WTC11 (cell line): ENCODE measurements at regions of chr3 and their contacts with region 1.

Region 1: DNA sequence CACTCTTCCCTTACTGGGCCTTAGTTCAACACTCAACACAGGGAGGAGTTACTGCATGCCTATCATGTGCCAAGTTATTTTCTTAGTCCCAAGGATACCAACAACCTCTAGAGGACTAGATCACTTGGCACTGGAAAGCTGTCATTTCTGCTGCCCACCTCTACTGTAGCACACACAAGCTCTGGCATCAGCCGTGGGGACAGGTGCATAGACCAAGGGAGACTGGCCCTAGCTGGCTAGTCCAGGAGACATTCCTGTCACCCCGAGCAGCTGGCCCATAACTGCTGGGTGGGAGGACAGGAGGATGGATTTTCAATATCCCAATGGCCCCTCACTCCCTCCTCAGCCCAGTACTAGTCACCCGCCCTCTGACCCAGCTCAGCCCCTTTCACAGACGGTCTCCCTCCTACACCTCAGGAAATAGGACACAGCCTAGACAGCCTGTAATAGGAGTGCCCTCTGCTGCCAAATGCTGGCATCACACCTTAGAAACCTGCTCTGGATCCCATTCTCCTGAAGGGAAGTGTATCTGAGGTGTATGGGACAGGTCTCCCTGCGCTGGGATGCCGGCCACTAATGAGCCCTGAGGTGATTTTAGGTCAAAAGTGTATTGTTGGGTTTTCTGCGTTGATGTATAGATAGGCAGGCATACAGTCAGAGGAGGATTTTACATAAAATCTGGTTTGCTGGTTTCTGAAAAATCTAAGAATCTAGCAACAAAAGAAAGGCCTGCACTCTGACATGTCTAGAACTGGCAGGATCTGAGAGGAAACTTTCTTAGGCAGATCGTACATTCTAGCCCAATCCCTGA is 3.4 kb upstream of the DZIP1L start:
- DNase-seq: peak; percentile 91
- ATAC-seq: peak; percentile 74
- H3K4me3 Mint-ChIP-seq: 0 out of 2 replicates have a peak overlapping the region, but pooled peaks have one; percentile 4
- H3K27ac Mint-ChIP-seq: no peak overlapping the region
- H3K4me1 Mint-ChIP-seq: peaks cover 23% of the 10 kb centered on the region
- H3K27me3 Mint-ChIP-seq: peaks cover 9% of the 10 kb centered on the region
- CTCF ChIP-seq: peak; percentile 66

Region 2: DNA sequence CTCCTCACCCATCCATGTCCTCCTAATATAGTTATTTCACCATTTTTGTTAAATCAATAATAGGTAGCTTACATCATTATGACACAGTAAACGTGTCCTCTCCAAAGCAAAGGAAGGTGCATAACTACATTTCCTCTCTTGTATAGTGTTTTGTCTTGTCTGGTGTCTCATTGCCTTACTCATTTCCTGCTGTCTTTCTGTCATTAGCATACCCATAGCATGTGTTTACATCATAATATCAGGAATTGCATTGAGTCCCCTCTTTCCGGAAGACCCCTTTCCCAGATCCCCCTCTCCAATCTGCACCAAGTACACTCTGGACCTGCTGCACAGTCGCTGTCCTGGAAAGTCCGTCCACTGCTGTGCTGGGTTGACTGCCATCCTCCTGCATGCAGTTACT is 306.8 kb before region 1 on chr3:
- CTCF ChIA-PET with region 1: no interaction called
- POLR2A ChIA-PET with region 1: no interaction called
- DNase-seq: no peak
- ATAC-seq: peak; percentile 69
- H3K4me3 Mint-ChIP-seq: peak overlapping the region; percentile 33
- H3K27ac Mint-ChIP-seq: peak overlapping the region; percentile 47
- H3K4me1 Mint-ChIP-seq: peaks cover 48% of the 10 kb centered on the region
- H3K27me3 Mint-ChIP-seq: no peaks in the 10 kb centered on the region
- CTCF ChIP-seq: no peak

Region 3: GRCh38 chr3:137946345-137946973 is 172.4 kb before region 1 on chr3:
- CTCF ChIA-PET with region 1: no interaction called
- POLR2A ChIA-PET with region 1: no interaction called
- DNase-seq: peak; percentile 69
- ATAC-seq: peak; percentile 65
- H3K4me3 Mint-ChIP-seq: no peak overlapping the region
- H3K27ac Mint-ChIP-seq: no peak overlapping the region
- H3K4me1 Mint-ChIP-seq: peaks cover 19% of the 10 kb centered on the region
- H3K27me3 Mint-ChIP-seq: peaks cover 29% of the 10 kb centered on the region
- CTCF ChIP-seq: peak; percentile 86

Region 4: DNA sequence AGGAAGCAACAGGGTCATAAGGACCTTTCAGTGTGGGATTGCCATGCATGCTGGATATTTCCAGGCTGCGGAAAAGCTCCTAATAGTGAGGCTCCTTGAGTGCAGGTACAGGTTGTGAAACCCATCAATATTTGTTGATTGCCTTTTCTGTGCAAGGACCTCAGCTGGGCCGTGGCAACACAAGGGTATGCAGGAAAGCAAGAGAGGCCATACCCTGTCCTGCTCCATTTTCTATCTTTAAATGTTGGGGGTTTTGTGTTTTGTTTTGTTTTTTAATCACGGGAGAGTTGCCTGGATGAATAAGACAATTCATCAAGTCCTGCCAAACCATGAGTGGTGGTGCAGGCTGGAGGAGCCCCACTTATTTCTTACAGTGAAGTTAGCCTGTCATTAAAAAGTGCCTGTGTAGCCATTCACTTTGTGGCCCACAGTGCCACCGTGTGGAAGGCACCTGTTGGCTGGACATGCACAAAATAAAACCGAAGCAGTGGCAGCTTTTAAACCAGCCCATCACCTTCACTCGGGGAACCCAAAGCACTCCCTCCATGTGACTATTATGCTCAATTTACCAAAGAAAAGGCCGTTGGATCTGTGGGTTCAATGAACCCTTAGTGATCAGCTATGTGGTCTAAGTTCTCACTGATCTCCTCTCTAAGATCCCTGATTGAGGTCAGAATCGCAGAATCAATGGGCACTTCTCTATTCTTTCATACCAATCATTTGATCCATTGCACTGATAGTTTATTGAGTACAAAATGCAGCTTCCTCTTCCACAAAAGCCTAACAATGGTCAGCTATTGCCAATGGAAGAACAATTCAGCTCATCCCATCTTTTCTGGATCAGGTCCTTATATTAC is 66.6 kb before region 1 on chr3:
- CTCF ChIA-PET with region 1: interaction called, 14 read pairs
- POLR2A ChIA-PET with region 1: no interaction called
- DNase-seq: peak; percentile 59
- ATAC-seq: peak; percentile 81
- H3K4me3 Mint-ChIP-seq: no peak overlapping the region
- H3K27ac Mint-ChIP-seq: no peak overlapping the region
- H3K4me1 Mint-ChIP-seq: peaks cover 9% of the 10 kb centered on the region
- H3K27me3 Mint-ChIP-seq: no peaks in the 10 kb centered on the region
- CTCF ChIP-seq: peak; percentile 27; the same call in 1 of the 2 replicates

Region 5: GRCh38 chr3:138068579-138069174 is 50.1 kb before region 1 on chr3:
- CTCF ChIA-PET with region 1: interaction called, 34 read pairs
- POLR2A ChIA-PET with region 1: interaction called, 4 read pairs
- DNase-seq: peak; percentile 89
- ATAC-seq: peak; percentile 97
- H3K4me3 Mint-ChIP-seq: no peak overlapping the region
- H3K27ac Mint-ChIP-seq: no peak overlapping the region
- H3K4me1 Mint-ChIP-seq: peaks cover 18% of the 10 kb centered on the region
- H3K27me3 Mint-ChIP-seq: no peaks in the 10 kb centered on the region
- CTCF ChIP-seq: peak; percentile 97

Region 6: DNA sequence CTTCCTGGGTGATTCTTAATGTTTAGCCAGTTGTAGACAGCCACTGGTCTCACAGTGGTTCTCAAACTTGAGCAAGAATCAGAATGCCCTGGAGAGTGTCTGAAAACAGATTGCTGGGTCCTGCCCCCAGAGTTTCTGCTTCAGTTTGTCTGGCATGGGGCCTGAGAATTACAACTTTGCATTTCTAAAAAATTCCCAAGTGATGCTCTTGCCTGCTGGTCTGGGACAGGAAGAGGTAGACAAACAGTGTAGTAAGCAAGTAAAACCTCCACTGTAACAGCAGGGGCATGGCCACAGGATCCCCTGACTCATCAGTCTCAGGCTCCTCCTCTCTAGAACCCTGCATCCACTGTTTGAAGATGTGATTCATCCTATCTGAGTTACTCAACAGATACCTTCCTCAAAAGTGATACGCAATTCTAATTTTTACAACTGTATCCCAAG is 39.9 kb before region 1 on chr3:
- CTCF ChIA-PET with region 1: interaction called, 20 read pairs
- POLR2A ChIA-PET with region 1: no interaction called
- DNase-seq: no peak
- ATAC-seq: no peak
- H3K4me3 Mint-ChIP-seq: no peak overlapping the region
- H3K27ac Mint-ChIP-seq: no peak overlapping the region
- H3K4me1 Mint-ChIP-seq: 0 out of 2 replicates have a peak, but pooled peaks cover 5% of the 10 kb centered on the region
- H3K27me3 Mint-ChIP-seq: no peaks in the 10 kb centered on the region
- CTCF ChIP-seq: no peak

Region 7: GRCh38 chr3:138097169-138097800 is 21.5 kb before region 1 on chr3:
- CTCF ChIA-PET with region 1: interaction called, 61 read pairs
- POLR2A ChIA-PET with region 1: no interaction called
- DNase-seq: peak; percentile 68
- ATAC-seq: peak; percentile 96
- H3K4me3 Mint-ChIP-seq: no peak overlapping the region
- H3K27ac Mint-ChIP-seq: no peak overlapping the region
- H3K4me1 Mint-ChIP-seq: peaks cover 15% of the 10 kb centered on the region
- H3K27me3 Mint-ChIP-seq: peaks cover 2% of the 10 kb centered on the region; the same call in 1 of the 2 replicates
- CTCF ChIP-seq: peak; percentile 30; the same call in 1 of the 2 replicates

Region 8: DNA sequence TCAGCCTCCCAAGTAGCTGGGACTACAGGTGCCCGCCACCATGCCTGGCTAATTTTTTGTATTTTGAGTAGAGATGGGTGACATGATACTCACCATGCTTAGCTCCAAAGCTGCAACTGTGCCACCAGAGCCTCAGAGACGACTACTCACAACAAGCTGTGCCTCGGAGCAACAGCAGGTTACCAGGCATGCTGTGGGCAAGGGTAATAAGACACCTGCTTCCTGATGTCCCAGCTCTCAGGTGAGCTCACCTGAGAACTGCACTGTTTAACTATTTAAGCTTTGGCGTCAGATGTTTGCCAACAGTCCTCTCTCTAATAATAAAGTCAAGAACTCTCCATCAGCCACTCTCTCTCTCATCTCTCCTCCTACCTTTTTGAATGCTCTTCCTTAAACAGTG is 10.7 kb before region 1 on chr3:
- CTCF ChIA-PET with region 1: interaction called, 15 read pairs
- POLR2A ChIA-PET with region 1: no interaction called
- DNase-seq: no peak
- ATAC-seq: no peak
- H3K4me3 Mint-ChIP-seq: no peak overlapping the region
- H3K27ac Mint-ChIP-seq: no peak overlapping the region
- H3K4me1 Mint-ChIP-seq: peaks cover 5% of the 10 kb centered on the region
- H3K27me3 Mint-ChIP-seq: no peaks in the 10 kb centered on the region
- CTCF ChIP-seq: no peak

Region 9: DNA sequence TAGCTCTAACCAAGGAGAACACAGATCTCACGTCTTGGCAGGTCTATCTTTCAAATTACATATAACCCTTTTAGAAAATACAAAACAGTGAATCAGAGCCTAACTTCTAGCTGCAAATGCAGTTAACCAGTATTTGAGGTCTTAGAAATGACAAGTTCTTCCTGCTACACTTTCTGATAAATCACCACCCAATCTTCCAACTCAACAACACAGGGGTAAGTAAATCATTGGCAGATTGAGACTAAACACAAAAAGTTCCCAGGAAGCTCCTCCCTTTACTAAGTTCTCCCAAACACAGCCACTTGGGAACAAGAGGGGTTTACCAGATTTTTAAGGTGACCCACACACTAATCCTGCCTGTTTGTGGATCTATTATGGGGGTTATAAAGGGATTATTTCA is 13.4 kb after region 1 on chr3 and contains the start of gene A4GNT:
- CTCF ChIA-PET with region 1: interaction called, 18 read pairs
- POLR2A ChIA-PET with region 1: no interaction called
- DNase-seq: no peak
- ATAC-seq: no peak
- H3K4me3 Mint-ChIP-seq: no peak within 1 kb of the TSS
- H3K27ac Mint-ChIP-seq: no peak within 1 kb of the TSS
- H3K4me1 Mint-ChIP-seq: peaks cover 6% of the 10 kb centered on the region; the same call in 1 of the 2 replicates
- H3K27me3 Mint-ChIP-seq: no peaks in the 10 kb centered on the region
- CTCF ChIP-seq: no peak
- total RNA-seq, gene A4GNT: not detected in 3 replicates